PC-9 (cell line): ENCODE measurements at regions of chr7 and their contacts with region 1.

Region 1: GRCh38 chr7:22577396-22578001 is 77.5 kb upstream of the STEAP1B start:
- DNase-seq: peak; percentile 54 to 100
- H3K4me3 ChIP-seq: peak overlapping the region; percentile 19; the same call in 1 of the 2 replicates
- H3K27ac ChIP-seq: peak overlapping the region; percentile 95
- H3K4me1 ChIP-seq: peaks cover 78% of the 10 kb centered on the region
- H3K27me3 ChIP-seq: no peaks in the 10 kb centered on the region
- CTCF ChIP-seq: no peak

Region 2: GRCh38 chr7:22565315-22565811 is 12.1 kb before region 1 on chr7:
- CTCF ChIA-PET with region 1: interaction called, 18 read pairs
- POLR2A ChIA-PET with region 1: interaction called, 18 read pairs
- intact Hi-C with region 1: loop called (anchors 1 kb)
- DNase-seq: peak in 1 of 2 experiments; percentile 89
- H3K4me3 ChIP-seq: peak overlapping the region; percentile 54; the same call in 1 of the 2 replicates
- H3K27ac ChIP-seq: peak overlapping the region; percentile 84
- H3K4me1 ChIP-seq: peaks cover 70% of the 10 kb centered on the region
- H3K27me3 ChIP-seq: no peaks in the 10 kb centered on the region
- CTCF ChIP-seq: no peak

Region 3: DNA sequence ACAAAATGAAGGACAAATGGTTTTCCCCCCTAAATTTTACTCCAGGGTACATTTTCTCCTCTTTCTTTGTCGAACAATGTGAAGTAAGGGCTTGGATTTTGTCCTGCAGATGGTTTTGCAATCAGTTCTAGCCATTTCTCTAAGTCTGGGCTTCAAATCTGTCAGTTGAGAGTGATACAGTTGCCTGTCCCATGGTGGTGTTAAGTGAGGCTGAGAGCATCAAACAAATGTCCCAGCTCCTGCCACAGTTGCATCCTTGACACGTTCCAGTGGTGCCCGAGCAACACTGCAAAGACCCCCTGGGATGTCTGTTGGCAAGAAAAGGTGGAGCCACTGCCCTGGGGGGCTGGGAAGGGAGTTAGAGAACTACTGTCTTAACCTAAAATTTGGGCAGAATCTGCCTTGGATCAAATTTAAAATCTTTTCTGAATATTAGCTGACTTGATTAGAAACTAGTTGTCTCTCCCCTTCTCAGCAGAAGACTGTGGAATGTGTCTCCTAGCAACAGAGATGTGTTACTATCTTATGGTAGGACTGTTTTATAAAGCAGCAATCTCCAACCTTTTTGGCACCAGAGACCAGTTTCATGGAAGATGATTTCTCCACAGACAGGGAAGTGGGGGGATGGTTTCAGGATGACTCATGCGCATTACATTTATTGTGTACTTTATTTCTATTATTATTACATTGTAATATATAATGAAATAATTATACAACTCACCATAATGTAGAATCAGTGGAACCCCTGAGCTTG is 24.5 kb after region 1 on chr7:
- CTCF ChIA-PET with region 1: no interaction called
- POLR2A ChIA-PET with region 1: no interaction called
- intact Hi-C with region 1: no loop called
- DNase-seq: no peak
- H3K4me3 ChIP-seq: no peak overlapping the region
- H3K27ac ChIP-seq: no peak overlapping the region
- H3K4me1 ChIP-seq: peaks cover 15% of the 10 kb centered on the region
- H3K27me3 ChIP-seq: no peaks in the 10 kb centered on the region
- CTCF ChIP-seq: no peak

Region 4: DNA sequence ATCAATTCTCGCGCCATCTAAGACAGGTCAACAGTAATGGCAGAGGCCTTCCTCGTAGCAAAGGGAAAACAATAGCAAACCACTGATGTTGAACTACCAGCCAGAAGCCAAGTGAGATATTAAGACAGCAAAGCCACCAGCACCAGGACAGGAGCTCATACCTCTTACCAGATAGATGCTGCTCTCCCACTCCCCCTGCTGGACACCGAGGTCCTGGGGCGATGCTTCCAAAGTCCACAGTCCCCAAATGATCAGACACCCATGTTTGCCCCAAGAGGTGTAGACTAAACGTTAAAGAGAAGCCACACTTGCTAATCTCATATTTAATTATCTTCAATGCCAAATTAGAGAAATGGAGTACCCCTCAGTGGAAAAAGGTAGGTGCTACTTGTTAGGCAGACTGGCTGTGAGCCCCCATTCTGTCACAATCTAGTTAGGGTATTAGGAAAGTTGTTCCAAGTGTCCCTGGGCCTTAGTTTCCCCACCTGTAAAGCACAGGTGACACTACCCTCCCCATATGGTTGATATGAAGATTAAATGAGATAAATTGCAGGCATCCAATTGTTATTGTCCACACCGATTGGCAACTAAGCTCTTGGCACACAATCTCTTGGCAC is 205.2 kb after region 1 on chr7:
- CTCF ChIA-PET with region 1: interaction called, 15 read pairs
- POLR2A ChIA-PET with region 1: no interaction called
- intact Hi-C with region 1: no loop called
- DNase-seq: peak; percentile 54 to 70
- H3K4me3 ChIP-seq: no peak overlapping the region
- H3K27ac ChIP-seq: no peak overlapping the region
- H3K4me1 ChIP-seq: no peaks in the 10 kb centered on the region; the same call in 1 of the 2 replicates
- H3K27me3 ChIP-seq: no peaks in the 10 kb centered on the region
- CTCF ChIP-seq: peak; percentile 95

Region 5: DNA sequence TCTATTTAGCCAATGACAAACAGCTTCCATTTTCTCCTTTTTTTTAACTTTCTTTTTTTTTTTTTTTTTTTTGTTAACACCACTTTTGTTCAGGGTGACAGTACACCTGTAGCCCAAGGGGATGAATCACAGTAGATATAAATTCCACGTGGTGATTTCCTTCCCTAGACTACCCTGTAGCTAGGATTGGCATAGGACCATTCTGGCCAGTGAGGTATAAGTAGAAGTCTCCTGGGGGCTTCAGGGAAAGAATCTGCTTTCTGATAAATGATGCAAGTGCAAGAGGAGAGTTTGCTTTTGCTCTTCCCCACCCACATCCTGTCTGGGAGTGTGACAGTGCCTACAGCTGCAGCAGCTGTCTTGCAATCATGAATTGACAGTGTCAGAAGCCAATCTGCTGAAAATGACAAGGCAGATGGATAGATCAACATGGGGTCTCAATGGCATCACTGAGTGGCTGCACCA is 308.3 kb after region 1 on chr7:
- CTCF ChIA-PET with region 1: no interaction called
- POLR2A ChIA-PET with region 1: interaction called, 11 read pairs
- intact Hi-C with region 1: no loop called
- DNase-seq: no peak
- H3K4me3 ChIP-seq: no peak overlapping the region
- H3K27ac ChIP-seq: no peak overlapping the region
- H3K4me1 ChIP-seq: no peaks in the 10 kb centered on the region
- H3K27me3 ChIP-seq: no peaks in the 10 kb centered on the region
- CTCF ChIP-seq: no peak